ENCODE measurements at regions of chr3 and their contacts with region 1.

Region 1: DNA sequence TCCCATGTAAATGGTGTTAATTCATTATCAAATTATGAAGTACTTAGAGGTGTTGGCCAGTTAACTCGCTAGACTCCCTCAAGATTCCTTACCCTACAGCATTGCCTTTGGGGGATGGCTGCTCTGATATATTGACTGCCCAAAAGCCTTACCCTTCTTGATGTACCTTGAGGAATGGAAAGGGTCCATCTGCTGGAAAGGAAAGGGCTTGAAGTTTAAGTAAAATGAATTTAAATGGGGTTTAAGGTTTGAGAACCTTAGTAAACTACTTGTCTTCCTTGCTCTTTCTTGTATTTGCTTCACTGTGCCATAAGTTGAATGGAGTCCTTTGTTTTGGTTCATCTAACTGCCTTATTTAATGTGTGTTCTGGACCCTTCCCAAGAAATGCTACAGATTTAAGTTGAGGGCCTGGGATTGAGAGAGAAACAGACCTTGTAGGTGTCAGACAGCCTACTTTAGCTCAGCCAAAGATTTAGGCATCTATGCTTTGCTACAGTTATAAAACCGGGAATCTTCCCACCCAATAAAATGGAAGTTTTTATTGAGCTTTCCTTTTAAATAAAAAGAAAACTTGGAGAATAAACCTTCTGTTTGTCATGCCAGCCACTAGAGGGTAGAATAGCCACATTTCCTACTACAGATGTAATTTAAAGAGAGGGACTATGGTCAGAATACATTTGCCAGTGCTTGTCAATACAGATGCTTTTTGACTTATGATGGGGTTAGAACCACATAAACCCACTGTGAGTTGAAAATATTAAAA is 25.3 kb downstream of the CMSS1 start:
- DNase-seq: no peak
- ATAC-seq: peak; percentile 86
- H3K4me3 ChIP-seq: no peak overlapping the region
- H3K27ac ChIP-seq: no peak overlapping the region
- H3K4me1 ChIP-seq: peaks cover 11% of the 10 kb centered on the region; the same call in 1 of the 2 replicates
- H3K27me3 ChIP-seq: no peaks in the 10 kb centered on the region
- CTCF ChIP-seq: peak; percentile 46 to 65 (median 57); a peak in 5 of 6 replicates
- EP300 ChIP-seq: no peak
- POLR2A ChIP-seq: no peak
- RAD21 ChIP-seq: peak; percentile 89

Region 2: DNA sequence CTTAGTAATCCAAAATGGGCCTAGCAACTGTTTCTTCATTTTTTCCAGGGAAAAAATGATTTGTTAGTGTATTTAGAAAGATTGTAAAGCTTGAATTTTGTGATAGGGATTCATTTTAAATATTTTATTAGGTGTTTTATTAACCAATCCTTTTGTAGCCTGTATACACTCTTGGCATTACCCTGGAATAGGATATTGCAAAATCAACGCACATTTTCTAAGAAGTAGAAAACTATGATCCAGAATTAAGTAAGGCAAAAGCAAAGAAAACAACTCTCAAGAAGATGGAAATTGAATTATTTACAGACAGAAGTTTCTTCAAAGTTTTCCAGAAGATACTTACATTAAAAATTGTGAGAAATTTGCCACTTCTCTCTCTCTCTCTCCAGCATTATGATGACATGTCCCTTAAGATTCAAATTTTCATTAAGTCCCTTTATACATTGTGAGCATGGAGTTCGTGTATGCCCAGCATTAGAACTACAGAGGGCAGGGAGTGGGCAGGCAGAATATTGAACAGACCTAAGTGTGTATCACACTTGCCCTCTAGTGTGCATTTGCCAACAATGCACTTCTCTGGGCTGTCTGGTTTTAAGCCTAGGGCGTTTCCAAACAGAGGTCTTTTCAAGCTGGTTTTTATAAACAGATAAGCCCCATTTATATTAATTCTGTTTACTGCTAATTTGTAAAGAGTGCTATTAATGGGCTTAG is 53.8 kb before region 1 on chr3:
- CTCF ChIA-PET with region 1: no interaction called
- POLR2A ChIA-PET with region 1: no interaction called
- RAD21 ChIA-PET with region 1: no interaction called
- SMC1A ChIA-PET with region 1: no interaction called
- in situ Hi-C with region 1: no loop called
- intact Hi-C with region 1: no loop called
- DNase-seq: no peak
- ATAC-seq: peak; percentile 99
- H3K4me3 ChIP-seq: no peak overlapping the region
- H3K27ac ChIP-seq: no peak overlapping the region
- H3K4me1 ChIP-seq: no peaks in the 10 kb centered on the region
- H3K27me3 ChIP-seq: no peaks in the 10 kb centered on the region; a peak in 1 of 4 replicates
- CTCF ChIP-seq: peak; percentile 63 to 72 (median 66); a peak in 5 of 6 replicates
- EP300 ChIP-seq: no peak
- POLR2A ChIP-seq: no peak
- RAD21 ChIP-seq: peak; percentile 64

Region 3: GRCh38 chr3:99859825-99860224 is 16.8 kb after region 1 on chr3:
- CTCF ChIA-PET with region 1: interaction called, 12 read pairs
- POLR2A ChIA-PET with region 1: no interaction called
- RAD21 ChIA-PET with region 1: no interaction called
- SMC1A ChIA-PET with region 1: interaction called, 8 read pairs
- in situ Hi-C with region 1: no loop called
- intact Hi-C with region 1: no loop called
- DNase-seq: no peak
- ATAC-seq: no peak
- H3K4me3 ChIP-seq: no peak overlapping the region
- H3K27ac ChIP-seq: no peak overlapping the region
- H3K4me1 ChIP-seq: peaks cover 8% of the 10 kb centered on the region
- H3K27me3 ChIP-seq: no peaks in the 10 kb centered on the region
- CTCF ChIP-seq: no peak
- EP300 ChIP-seq: no peak
- POLR2A ChIP-seq: no peak
- RAD21 ChIP-seq: no peak

Region 4: DNA sequence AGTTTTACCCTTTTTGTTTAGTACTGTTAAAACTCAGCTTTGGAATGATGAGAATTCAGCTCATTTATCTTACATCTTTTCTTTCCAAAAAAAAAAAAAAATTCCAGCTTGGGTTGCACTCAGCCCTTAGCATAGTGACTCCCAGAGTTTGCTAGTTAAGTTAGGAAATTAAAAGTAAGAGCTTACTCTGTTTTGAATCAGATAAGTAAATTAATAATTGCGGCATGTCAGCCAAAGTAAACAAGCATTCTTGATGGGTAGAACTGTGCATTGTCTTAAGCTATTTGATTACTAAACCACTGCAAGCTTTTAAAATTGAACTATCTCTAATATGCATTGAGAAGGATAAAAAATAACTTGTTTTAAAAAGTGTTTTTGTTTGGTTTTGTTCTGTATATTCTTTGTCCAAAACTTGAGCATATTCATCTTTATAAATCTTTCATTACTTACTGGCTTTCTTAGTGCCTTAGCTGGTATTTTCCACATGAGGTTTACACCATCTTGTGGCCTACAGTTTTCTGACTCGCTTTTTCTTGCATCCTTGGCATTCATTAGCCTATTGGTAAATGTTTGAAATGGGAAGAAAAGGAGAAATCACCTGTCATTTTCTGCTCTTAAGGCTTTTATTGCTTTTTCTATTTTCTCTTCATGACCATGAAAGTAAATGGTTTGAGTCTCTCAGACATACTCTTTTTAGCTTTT is 163.7 kb after region 1 on chr3:
- CTCF ChIA-PET with region 1: interaction called, 17 read pairs
- POLR2A ChIA-PET with region 1: no interaction called
- RAD21 ChIA-PET with region 1: interaction called, 5 read pairs
- SMC1A ChIA-PET with region 1: interaction called, 15 read pairs
- in situ Hi-C with region 1: no loop called
- intact Hi-C with region 1: no loop called
- DNase-seq: no peak
- ATAC-seq: no peak
- H3K4me3 ChIP-seq: no peak overlapping the region
- H3K27ac ChIP-seq: no peak overlapping the region
- H3K4me1 ChIP-seq: peaks cover 2% of the 10 kb centered on the region; the same call in 1 of the 2 replicates
- H3K27me3 ChIP-seq: no peaks in the 10 kb centered on the region
- CTCF ChIP-seq: peak in 1 of 3 experiments; percentile 13; a peak in 1 of 6 replicates
- EP300 ChIP-seq: no peak
- POLR2A ChIP-seq: no peak
- RAD21 ChIP-seq: peak; percentile 32; the same call in 1 of the 2 replicates

Region 5: DNA sequence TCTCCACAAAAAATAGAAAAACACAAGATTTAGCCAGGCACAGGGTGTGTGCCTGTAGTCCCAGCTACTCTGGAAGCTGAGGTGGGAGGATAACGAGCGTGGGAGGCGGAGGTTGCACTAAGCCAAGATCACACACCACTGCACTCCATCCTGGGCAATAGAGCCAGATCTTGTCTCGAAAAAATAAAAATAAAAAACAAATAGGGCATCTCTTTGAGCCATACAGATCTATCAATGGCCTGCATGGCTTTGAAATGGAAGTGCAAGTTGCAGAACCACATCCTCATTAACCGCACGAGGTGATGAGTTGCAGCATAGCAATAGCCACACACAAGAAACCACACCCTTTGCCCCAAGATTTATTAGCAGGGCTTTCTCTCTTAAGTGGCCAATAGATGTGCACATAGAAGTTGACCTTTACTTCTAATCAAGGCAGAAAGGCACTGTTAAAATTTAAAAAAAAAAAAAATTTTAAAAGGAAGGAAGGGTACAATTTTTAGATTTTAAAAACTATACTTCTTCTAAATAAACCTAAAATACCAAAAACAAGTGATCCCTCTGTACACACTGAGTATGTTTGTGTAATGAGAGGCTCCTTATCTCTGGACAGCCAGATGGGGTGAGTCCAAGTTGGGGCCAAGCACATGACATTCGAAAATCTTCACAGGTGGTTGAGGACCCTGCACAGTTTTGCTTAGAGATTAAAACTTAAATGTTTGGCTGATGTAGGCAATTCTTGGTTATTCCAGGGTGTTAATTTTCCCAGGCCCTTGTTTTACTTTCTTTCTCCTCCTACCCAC is 217.9 kb after region 1 on chr3:
- CTCF ChIA-PET with region 1: interaction called, 11 read pairs
- POLR2A ChIA-PET with region 1: no interaction called
- RAD21 ChIA-PET with region 1: interaction called, 5 read pairs
- SMC1A ChIA-PET with region 1: interaction called, 11 read pairs
- in situ Hi-C with region 1: loop called (anchors 5 kb)
- intact Hi-C with region 1: loop called (anchors 5 kb)
- DNase-seq: no peak
- ATAC-seq: peak; percentile 32; the same call in 2 of the 3 replicates
- H3K4me3 ChIP-seq: no peak overlapping the region
- H3K27ac ChIP-seq: no peak overlapping the region
- H3K4me1 ChIP-seq: no peaks in the 10 kb centered on the region; the same call in 1 of the 2 replicates
- H3K27me3 ChIP-seq: no peaks in the 10 kb centered on the region
- CTCF ChIP-seq: no peak
- EP300 ChIP-seq: no peak
- POLR2A ChIP-seq: no peak
- RAD21 ChIP-seq: no peak

Region 6: DNA sequence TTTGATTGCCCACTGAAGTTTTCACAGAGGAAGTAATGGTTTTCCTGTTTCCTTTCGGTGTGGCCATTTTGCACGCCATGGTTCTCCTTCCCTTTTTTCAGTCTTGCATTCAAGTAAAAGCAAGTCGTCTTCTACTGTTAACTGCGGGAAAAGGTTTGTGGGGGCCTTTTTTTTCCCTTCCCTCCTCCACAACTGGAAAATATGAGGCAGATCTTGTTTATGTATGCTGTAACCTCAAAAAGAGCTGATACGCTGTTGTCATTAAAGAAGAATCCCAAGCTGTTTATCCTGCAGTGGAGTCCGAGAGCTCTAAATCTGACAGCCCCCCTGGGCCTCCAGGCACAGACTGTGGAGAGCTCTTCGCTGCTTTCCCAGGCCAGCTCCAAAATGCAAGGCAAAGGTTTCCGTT is 230.9 kb after region 1 on chr3:
- CTCF ChIA-PET with region 1: interaction called, 42 read pairs
- POLR2A ChIA-PET with region 1: no interaction called
- RAD21 ChIA-PET with region 1: interaction called, 16 read pairs
- SMC1A ChIA-PET with region 1: interaction called, 11 read pairs
- in situ Hi-C with region 1: loop called (anchors 5 kb)
- intact Hi-C with region 1: loop called (anchors 5 kb)
- DNase-seq: no peak
- ATAC-seq: peak; percentile 12; the same call in 2 of the 3 replicates
- H3K4me3 ChIP-seq: peak overlapping the region; percentile 48; the same call in 1 of the 2 replicates
- H3K27ac ChIP-seq: no peak overlapping the region
- H3K4me1 ChIP-seq: peaks cover 21% of the 10 kb centered on the region
- H3K27me3 ChIP-seq: no peaks in the 10 kb centered on the region
- CTCF ChIP-seq: no peak
- EP300 ChIP-seq: peak; percentile 14 to 39; a peak in 2 of 4 replicates
- POLR2A ChIP-seq: no peak
- RAD21 ChIP-seq: no peak

Region 7: DNA sequence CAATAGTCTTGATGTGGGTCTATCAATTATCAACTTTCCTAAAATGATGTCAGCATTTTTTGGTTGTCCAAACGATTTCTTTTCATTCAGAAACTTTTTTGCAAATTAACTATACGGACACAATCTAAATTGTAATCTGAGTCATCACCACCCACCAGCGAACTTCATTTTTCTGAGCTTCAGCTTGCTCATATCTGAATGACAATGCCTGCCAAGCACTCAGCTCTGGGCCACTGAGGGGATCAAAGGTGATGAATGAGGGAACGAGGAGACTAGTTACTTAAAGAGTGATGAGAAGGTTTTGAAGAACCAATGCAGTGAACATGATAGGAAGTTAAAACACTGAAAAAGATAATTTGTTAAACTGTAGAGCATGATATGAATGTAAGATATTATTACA is 402.9 kb after region 1 on chr3:
- CTCF ChIA-PET with region 1: interaction called, 13 read pairs
- POLR2A ChIA-PET with region 1: no interaction called
- RAD21 ChIA-PET with region 1: interaction called, 3 read pairs
- SMC1A ChIA-PET with region 1: interaction called, 3 read pairs
- in situ Hi-C with region 1: loop called (anchors 5 kb)
- intact Hi-C with region 1: no loop called
- DNase-seq: no peak
- ATAC-seq: no peak
- H3K4me3 ChIP-seq: no peak overlapping the region
- H3K27ac ChIP-seq: no peak overlapping the region
- H3K4me1 ChIP-seq: no peaks in the 10 kb centered on the region
- H3K27me3 ChIP-seq: no peaks in the 10 kb centered on the region
- CTCF ChIP-seq: no peak
- EP300 ChIP-seq: no peak
- POLR2A ChIP-seq: no peak
- RAD21 ChIP-seq: no peak

Region 8: GRCh38 chr3:100260685-100261484 is 417.9 kb after region 1 on chr3 and contains the start of gene TBC1D23:
- CTCF ChIA-PET with region 1: interaction called, 80 read pairs
- POLR2A ChIA-PET with region 1: no interaction called
- RAD21 ChIA-PET with region 1: interaction called, 62 read pairs
- SMC1A ChIA-PET with region 1: interaction called, 46 read pairs
- in situ Hi-C with region 1: no loop called
- intact Hi-C with region 1: no loop called
- DNase-seq: peak; percentile 98
- ATAC-seq: peak; percentile 99
- H3K4me3 ChIP-seq: peak within 1 kb of the TSS; percentile 95
- H3K27ac ChIP-seq: peak within 1 kb of the TSS; percentile 84
- H3K4me1 ChIP-seq: no peaks in the 10 kb centered on the region
- H3K27me3 ChIP-seq: no peaks in the 10 kb centered on the region
- CTCF ChIP-seq: no peak
- EP300 ChIP-seq: no peak
- POLR2A ChIP-seq: peak; percentile 87
- RAD21 ChIP-seq: no peak
- polyA plus RNA-seq, gene TBC1D23: 13.5 to 16.2 TPM